MCF 10A (cell line): ENCODE measurements at regions of chr17 and their contacts with region 1.

Region 1: GRCh38 chr17:409848-410545 is 57.4 kb upstream of the RPH3AL start:
- DNase-seq: peak; percentile 99
- H3K4me3 Mint-ChIP-seq: peak overlapping the region; percentile 83
- H3K27ac Mint-ChIP-seq: peak overlapping the region; percentile 91
- H3K4me1 Mint-ChIP-seq: peaks cover 14% of the 10 kb centered on the region
- H3K27me3 Mint-ChIP-seq: no peaks in the 10 kb centered on the region
- CTCF ChIP-seq: no peak

Region 2: DNA sequence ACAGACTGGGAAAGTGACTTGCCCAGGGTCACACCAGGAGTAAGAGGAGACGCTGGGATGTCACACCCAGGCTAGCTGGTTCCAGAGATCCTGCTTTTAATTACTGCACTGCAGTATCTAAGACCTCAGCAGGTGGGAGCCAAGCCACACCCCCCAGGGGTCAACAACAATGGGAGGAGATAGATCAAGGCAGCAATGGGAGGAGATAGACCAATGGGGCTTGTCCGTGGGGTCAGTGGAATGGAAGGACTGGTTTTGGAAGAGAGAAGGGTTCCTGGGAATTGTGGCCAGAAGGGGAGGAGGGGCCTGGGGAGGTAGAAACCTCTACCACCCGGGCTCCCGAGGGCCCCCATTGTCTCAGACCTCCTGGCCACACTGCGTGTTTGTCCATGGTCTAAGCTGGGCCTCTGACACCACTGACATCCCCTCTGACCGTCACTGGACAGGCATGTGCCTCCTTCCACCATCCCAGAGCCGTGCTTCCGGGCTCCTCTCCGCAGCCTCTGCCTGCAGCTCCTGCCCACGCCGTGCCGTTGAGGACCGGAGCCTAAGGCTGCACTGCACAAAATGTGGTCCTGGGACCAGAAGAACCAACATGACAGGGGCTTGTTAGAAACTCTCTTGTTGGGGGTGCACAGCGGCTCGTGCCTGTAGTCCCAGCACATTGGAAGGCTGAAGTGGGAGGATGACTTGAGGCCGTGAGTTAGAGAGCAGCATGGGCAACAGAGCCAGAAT is 12.4 kb after region 1 on chr17:
- CTCF ChIA-PET with region 1: interaction called, 10 read pairs
- POLR2A ChIA-PET with region 1: no interaction called
- intact Hi-C with region 1: no loop called
- DNase-seq: no peak
- H3K4me3 Mint-ChIP-seq: no peak overlapping the region
- H3K27ac Mint-ChIP-seq: no peak overlapping the region
- H3K4me1 Mint-ChIP-seq: no peaks in the 10 kb centered on the region
- H3K27me3 Mint-ChIP-seq: no peaks in the 10 kb centered on the region
- CTCF ChIP-seq: no peak

Region 3: GRCh38 chr17:693791-694638 is 284.0 kb after region 1 on chr17:
- CTCF ChIA-PET with region 1: interaction called, 113 read pairs
- POLR2A ChIA-PET with region 1: interaction called, 8 read pairs
- intact Hi-C with region 1: no loop called
- DNase-seq: peak; percentile 78
- H3K4me3 Mint-ChIP-seq: peak overlapping the region; percentile 55
- H3K27ac Mint-ChIP-seq: peak overlapping the region; percentile 75
- H3K4me1 Mint-ChIP-seq: peaks cover 30% of the 10 kb centered on the region
- H3K27me3 Mint-ChIP-seq: no peaks in the 10 kb centered on the region
- CTCF ChIP-seq: no peak

Region 4: GRCh38 chr17:700504-701094 is 290.6 kb after region 1 on chr17:
- CTCF ChIA-PET with region 1: interaction called, 113 read pairs
- POLR2A ChIA-PET with region 1: interaction called, 18 read pairs
- intact Hi-C with region 1: loop called (anchors 1 kb)
- DNase-seq: peak; percentile 50
- H3K4me3 Mint-ChIP-seq: no peak overlapping the region
- H3K27ac Mint-ChIP-seq: no peak overlapping the region
- H3K4me1 Mint-ChIP-seq: no peaks in the 10 kb centered on the region
- H3K27me3 Mint-ChIP-seq: no peaks in the 10 kb centered on the region
- CTCF ChIP-seq: peak; percentile 47

Region 5: DNA sequence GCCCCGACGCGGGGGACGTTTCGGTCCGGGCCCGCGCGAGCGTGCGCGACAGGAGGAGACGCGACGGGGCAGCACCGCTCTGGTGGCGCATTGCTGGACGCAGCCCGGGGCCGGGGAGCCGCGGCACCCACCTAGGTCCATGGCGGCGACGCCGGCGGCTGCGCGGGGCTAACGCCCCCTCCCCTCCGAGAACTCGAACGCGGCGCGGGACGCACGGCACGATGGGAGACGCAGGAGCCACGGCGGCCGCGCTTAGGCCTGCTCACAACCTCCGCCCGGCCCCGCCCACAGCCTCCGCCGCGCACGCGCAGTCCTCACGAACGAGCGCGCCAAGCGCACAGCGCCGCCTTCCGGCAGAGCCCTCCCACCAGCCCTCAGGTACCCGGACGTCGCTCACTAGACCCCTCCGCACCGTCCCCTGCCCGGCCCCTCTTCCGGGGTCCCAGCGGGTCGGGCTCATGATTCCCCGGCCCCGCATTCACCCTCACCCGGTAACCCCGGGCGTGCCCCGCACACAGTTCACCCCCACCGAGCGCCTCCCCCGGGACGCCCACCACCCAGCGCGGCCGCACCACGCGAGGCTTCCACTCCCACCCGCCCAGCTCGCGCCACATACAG is 342.1 kb after region 1 on chr17 and contains the start of gene GEMIN4:
- CTCF ChIA-PET with region 1: interaction called, 4 read pairs
- POLR2A ChIA-PET with region 1: interaction called, 4 read pairs
- intact Hi-C with region 1: loop called (anchors 5 kb)
- DNase-seq: peak; percentile 88
- H3K4me3 Mint-ChIP-seq: peak within 1 kb of the TSS; percentile 98
- H3K27ac Mint-ChIP-seq: peak within 1 kb of the TSS; percentile 93
- H3K4me1 Mint-ChIP-seq: peaks cover 18% of the 10 kb centered on the region
- H3K27me3 Mint-ChIP-seq: no peaks in the 10 kb centered on the region
- CTCF ChIP-seq: peak; percentile 97
- total RNA-seq, gene GEMIN4: 19.5 and 24.1 TPM in 2 replicates